AG04449 (cell line): ENCODE measurements at regions of chr1 and their contacts with region 1.

Region 1: GRCh38 chr1:101344745-101345144 is 107.9 kb downstream of the S1PR1 start:
- DNase-seq: no peak
- H3K4me3 ChIP-seq: no peak overlapping the region
- CTCF ChIP-seq: no peak

Region 2: GRCh38 chr1:101357444-101357986 is 12.8 kb after region 1 on chr1:
- CTCF ChIA-PET with region 1: interaction called, 18 read pairs
- POLR2A ChIA-PET with region 1: no interaction called
- DNase-seq: no peak
- H3K4me3 ChIP-seq: no peak overlapping the region
- CTCF ChIP-seq: peak; percentile 62

Region 3: GRCh38 chr1:101371259-101371658 is 26.5 kb after region 1 on chr1:
- CTCF ChIA-PET with region 1: no interaction called
- POLR2A ChIA-PET with region 1: no interaction called
- DNase-seq: no peak
- H3K4me3 ChIP-seq: no peak overlapping the region
- CTCF ChIP-seq: no peak